ENCODE measurements at regions of chr3 and their contacts with region 1.

Region 1: DNA sequence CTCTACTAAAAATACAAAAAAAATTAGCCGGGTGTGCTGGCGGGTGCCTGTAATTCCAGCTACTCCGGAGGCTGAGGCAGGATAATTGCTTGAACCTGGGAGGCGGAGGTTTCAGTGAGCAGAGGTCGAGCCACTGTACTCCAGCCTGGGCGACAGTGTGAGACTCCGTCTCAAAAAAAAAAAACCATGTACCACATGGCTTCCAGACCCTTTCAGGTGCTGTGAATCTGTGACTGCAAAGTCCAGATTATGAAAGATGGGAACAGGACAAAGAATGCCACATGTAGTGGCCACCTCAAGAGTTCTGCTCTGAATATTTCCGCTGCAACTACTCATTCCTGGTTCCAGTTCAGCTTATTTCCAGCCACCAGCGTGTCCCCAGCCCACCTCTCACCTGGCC is 8.4 kb upstream of the DCAF1 start:
- DNase-seq: no peak
- ATAC-seq: no peak
- H3K4me3 ChIP-seq: no peak overlapping the region
- H3K27ac ChIP-seq: no peak overlapping the region
- H3K4me1 ChIP-seq: no peaks in the 10 kb centered on the region
- H3K27me3 ChIP-seq: no peaks in the 10 kb centered on the region
- CTCF ChIP-seq: no peak
- POLR2A ChIP-seq: no peak

Region 2: GRCh38 chr3:51670823-51671733 is 162.8 kb after region 1 on chr3 and contains the start of gene TEX264:
- intact Hi-C with region 1: loop called (anchors 5 kb)
- DNase-seq: peak; percentile 90 to 92 (median 91)
- ATAC-seq: peak; percentile 83
- H3K4me3 ChIP-seq: peak within 1 kb of the TSS; percentile 68 to 75
- H3K27ac ChIP-seq: peak within 1 kb of the TSS; percentile 58 to 96 (median 92)
- H3K4me1 ChIP-seq: peaks cover 31% of the 10 kb centered on the region
- H3K27me3 ChIP-seq: no peaks in the 10 kb centered on the region
- CTCF ChIP-seq: no peak
- POLR2A ChIP-seq: peak; percentile 62 to 79 (median 77)
- total RNA-seq, gene TEX264: 41.2 to 44.1 TPM

Region 3: GRCh38 chr3:51684971-51685751 is 176.9 kb after region 1 on chr3:
- intact Hi-C with region 1: no loop called
- DNase-seq: no peak
- ATAC-seq: no peak
- H3K4me3 ChIP-seq: no peak overlapping the region
- H3K27ac ChIP-seq: peak overlapping the region in 3 of 4 donors; percentile 9 to 39 (median 28)
- H3K4me1 ChIP-seq: no peaks in the 10 kb centered on the region
- H3K27me3 ChIP-seq: no peaks in the 10 kb centered on the region
- CTCF ChIP-seq: no peak
- POLR2A ChIP-seq: no peak

Region 4: GRCh38 chr3:51799879-51800749 is 291.9 kb after region 1 on chr3:
- intact Hi-C with region 1: loop called (anchors 5 kb)
- DNase-seq: peak in 3 of 4 donors; percentile 16 to 49 (median 25)
- ATAC-seq: peak; percentile 80
- H3K4me3 ChIP-seq: no peak overlapping the region
- H3K27ac ChIP-seq: no peak overlapping the region
- H3K4me1 ChIP-seq: no peaks in the 10 kb centered on the region
- H3K27me3 ChIP-seq: no peaks in the 10 kb centered on the region
- CTCF ChIP-seq: peak; percentile 62 to 85 (median 72)
- POLR2A ChIP-seq: no peak

Measured in body of pancreas (tissue), 4 donors.